B cell (primary cell): ENCODE measurements at regions of chr1 and their contacts with region 1.

Region 1: GRCh38 chr1:153922972-153923925 is at the start of gene GATAD2B:
- DNase-seq: peak; percentile 100
- ATAC-seq: peak; percentile 91
- H3K4me3 ChIP-seq: peak within 1 kb of the TSS; percentile 85 to 98 (median 97)
- H3K4me3 Mint-ChIP-seq: peak within 1 kb of the TSS; percentile 95
- H3K27ac ChIP-seq: peak within 1 kb of the TSS; percentile 84 to 99
- H3K27ac Mint-ChIP-seq: peak within 1 kb of the TSS; percentile 99
- H3K4me1 ChIP-seq: peaks cover 39 to 41% of the 10 kb centered on the region in 2 donors
- H3K4me1 Mint-ChIP-seq: peaks cover 43% of the 10 kb centered on the region
- H3K27me3 ChIP-seq: no peaks in the 10 kb centered on the region
- H3K27me3 Mint-ChIP-seq: no peaks in the 10 kb centered on the region
- CTCF ChIP-seq: no peak
- total RNA-seq, gene GATAD2B: 99.6 and 105 TPM in 2 replicates

Region 2: GRCh38 chr1:153670859-153671627 is 252.2 kb before region 1 on chr1 and contains the start of gene ILF2:
- CTCF ChIA-PET with region 1: no interaction called
- POLR2A ChIA-PET with region 1: no interaction called
- intact Hi-C with region 1: loop called (anchors 2 kb)
- DNase-seq: peak; percentile 99
- ATAC-seq: peak; percentile 90
- H3K4me3 ChIP-seq: peak within 1 kb of the TSS; percentile 74 to 99 (median 94)
- H3K4me3 Mint-ChIP-seq: no peak within 1 kb of the TSS
- H3K27ac ChIP-seq: peak within 1 kb of the TSS; percentile 86 to 95
- H3K27ac Mint-ChIP-seq: no peak within 1 kb of the TSS
- H3K4me1 ChIP-seq: peaks cover 10 to 18% of the 10 kb centered on the region in 2 donors
- H3K4me1 Mint-ChIP-seq: peaks cover 18% of the 10 kb centered on the region
- H3K27me3 ChIP-seq: no peaks in the 10 kb centered on the region
- H3K27me3 Mint-ChIP-seq: peaks cover under 1% of the 10 kb centered on the region
- CTCF ChIP-seq: peak; percentile 26
- total RNA-seq, gene ILF2: 86.5 and 89.8 TPM in 2 replicates

Region 3: DNA sequence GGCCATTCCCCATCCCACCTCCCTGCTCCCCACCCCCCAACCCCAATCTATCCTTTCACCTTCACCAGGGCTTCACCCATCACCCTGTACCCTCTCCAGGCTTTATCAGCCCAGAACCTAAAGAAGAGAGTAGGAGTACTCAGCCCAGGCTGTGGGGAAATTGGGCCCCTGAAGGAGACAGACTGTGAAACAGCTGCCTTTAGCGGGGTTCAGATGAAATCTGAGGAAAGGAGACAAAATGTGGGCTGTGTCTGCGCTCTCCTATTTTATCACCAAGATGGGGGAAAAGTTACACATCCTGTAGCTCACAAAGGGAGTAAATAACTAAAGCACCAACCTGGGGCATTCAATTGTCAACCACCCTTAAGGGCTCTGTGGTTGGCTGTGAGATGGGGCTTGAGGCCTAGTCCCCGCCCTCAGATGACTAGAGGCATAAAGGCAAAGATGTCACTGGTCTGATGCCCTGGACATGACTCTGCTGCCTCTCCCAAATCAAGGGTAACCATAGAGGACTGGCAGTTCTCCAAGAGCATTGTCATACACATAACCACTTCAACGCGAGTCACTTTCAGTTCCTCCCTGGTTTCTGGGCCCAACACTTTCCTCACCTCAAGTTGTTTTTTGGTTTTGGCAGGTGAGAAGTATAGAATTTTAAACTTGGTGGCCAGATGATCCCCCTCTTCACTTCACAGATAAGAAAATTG is 118.1 kb before region 1 on chr1:
- CTCF ChIA-PET with region 1: interaction called, 4 read pairs
- POLR2A ChIA-PET with region 1: interaction called, 3 read pairs
- intact Hi-C with region 1: loop called (anchors 1 kb)
- DNase-seq: peak; percentile 91
- ATAC-seq: peak; percentile 98
- H3K4me3 ChIP-seq: no peak overlapping the region
- H3K4me3 Mint-ChIP-seq: peak overlapping the region; percentile 21
- H3K27ac ChIP-seq: peak overlapping the region; percentile 82 to 88
- H3K27ac Mint-ChIP-seq: peak overlapping the region; percentile 81
- H3K4me1 ChIP-seq: peaks cover 22 to 33% of the 10 kb centered on the region in 2 donors
- H3K4me1 Mint-ChIP-seq: peaks cover 30% of the 10 kb centered on the region
- H3K27me3 ChIP-seq: no peaks in the 10 kb centered on the region
- H3K27me3 Mint-ChIP-seq: no peaks in the 10 kb centered on the region
- CTCF ChIP-seq: no peak

Region 4: DNA sequence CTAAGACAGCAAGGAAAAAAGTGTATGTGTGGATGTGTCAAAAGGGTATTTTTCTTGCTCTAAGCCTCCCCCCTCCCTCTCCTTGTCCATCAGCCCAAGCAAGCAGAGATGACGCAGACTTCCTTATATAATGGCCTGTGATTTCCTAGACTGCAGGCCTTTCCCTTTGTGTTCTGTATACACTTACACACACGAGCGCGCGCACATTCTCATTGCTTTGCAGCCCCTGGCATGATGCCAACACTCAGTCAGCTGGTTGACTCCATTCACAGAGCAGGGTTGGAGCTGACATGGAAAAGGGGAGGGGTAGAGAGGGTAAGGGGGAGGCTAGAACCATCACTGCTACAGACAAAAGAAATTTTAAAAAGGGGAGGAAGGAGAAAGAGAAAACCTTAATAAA is 42.3 kb before region 1 on chr1:
- CTCF ChIA-PET with region 1: interaction called, 3 read pairs
- POLR2A ChIA-PET with region 1: no interaction called
- intact Hi-C with region 1: loop called (anchors 5 kb)
- DNase-seq: peak; percentile 54
- ATAC-seq: peak; percentile 82
- H3K4me3 ChIP-seq: no peak overlapping the region
- H3K4me3 Mint-ChIP-seq: no peak overlapping the region
- H3K27ac ChIP-seq: peak overlapping the region; percentile 29 to 39
- H3K27ac Mint-ChIP-seq: no peak overlapping the region
- H3K4me1 ChIP-seq: peaks cover 27 to 36% of the 10 kb centered on the region in 2 donors
- H3K4me1 Mint-ChIP-seq: peaks cover 27% of the 10 kb centered on the region
- H3K27me3 ChIP-seq: no peaks in the 10 kb centered on the region
- H3K27me3 Mint-ChIP-seq: no peaks in the 10 kb centered on the region
- CTCF ChIP-seq: no peak

Region 5: DNA sequence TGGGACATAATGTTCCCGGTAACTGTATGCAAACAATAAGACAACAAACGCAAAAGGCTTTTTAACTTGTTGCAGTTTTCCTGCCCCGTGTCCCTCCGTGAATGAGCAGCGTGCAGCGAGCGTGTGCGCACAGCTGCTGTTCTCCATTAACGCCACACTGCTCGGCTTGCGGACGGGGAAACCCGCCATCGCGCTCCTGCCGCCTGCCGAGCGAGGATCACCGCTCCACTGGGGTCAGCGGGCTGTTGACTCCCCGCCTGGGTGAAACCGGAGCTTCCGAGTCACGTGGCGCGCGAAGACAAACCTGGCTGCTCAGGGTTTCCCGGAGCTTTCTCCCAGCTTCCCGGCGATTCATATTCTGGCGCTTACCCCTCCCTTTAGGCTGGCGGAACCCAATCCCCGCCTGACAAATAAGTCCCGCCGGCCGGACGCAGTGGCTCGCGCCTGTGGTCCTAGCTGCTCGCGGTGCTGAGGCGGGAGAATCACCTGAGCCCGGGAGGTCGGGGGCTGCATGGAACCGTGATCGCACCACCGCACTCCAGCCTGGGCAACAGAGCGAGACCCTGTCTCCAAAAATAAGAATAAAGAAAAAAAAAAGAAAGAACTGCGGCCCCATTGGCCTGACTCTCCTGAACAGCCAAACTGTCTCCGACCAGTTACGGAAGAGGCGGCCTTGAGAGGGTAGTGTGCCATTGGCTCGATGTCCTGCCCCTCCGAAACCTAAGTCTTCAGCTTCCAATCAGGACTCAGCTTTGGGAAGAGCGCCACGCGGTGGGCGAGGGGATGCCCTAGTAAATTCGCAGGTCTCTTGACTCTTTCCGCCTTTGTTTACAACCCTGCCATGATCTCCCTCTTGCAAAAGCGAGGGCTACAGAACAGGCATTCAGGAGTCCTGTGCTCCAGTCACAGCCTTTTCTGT is 44.1 kb after region 1 on chr1 and contains the start of gene CREB3L4:
- CTCF ChIA-PET with region 1: interaction called, 6 read pairs
- POLR2A ChIA-PET with region 1: interaction called, 28 read pairs
- intact Hi-C with region 1: loop called (anchors 1 kb)
- DNase-seq: peak; percentile 94
- ATAC-seq: peak; percentile 82
- H3K4me3 ChIP-seq: peak within 1 kb of the TSS; percentile 73 to 95 (median 90)
- H3K4me3 Mint-ChIP-seq: peak within 1 kb of the TSS; percentile 98
- H3K27ac ChIP-seq: peak within 1 kb of the TSS; percentile 91 to 94
- H3K27ac Mint-ChIP-seq: peak within 1 kb of the TSS; percentile 99
- H3K4me1 ChIP-seq: peaks cover 43 to 51% of the 10 kb centered on the region in 2 donors
- H3K4me1 Mint-ChIP-seq: peaks cover 49% of the 10 kb centered on the region
- H3K27me3 ChIP-seq: no peaks in the 10 kb centered on the region
- H3K27me3 Mint-ChIP-seq: no peaks in the 10 kb centered on the region
- CTCF ChIP-seq: peak; percentile 39
- total RNA-seq, gene CREB3L4: 19.9 and 21.8 TPM in 2 replicates

Region 6: GRCh38 chr1:154627257-154628120 is 704.2 kb after region 1 on chr1:
- CTCF ChIA-PET with region 1: no interaction called
- POLR2A ChIA-PET with region 1: no interaction called
- intact Hi-C with region 1: loop called (anchors 5 kb)
- DNase-seq: peak; percentile 93
- ATAC-seq: peak; percentile 77
- H3K4me3 ChIP-seq: peak overlapping the region; percentile 66 to 94 (median 88)
- H3K4me3 Mint-ChIP-seq: peak overlapping the region; percentile 94
- H3K27ac ChIP-seq: peak overlapping the region; percentile 94 to 98
- H3K27ac Mint-ChIP-seq: peak overlapping the region; percentile 99
- H3K4me1 ChIP-seq: peaks cover 8 to 12% of the 10 kb centered on the region in 2 donors
- H3K4me1 Mint-ChIP-seq: peaks cover 35% of the 10 kb centered on the region
- H3K27me3 ChIP-seq: peaks cover 0 to 3% (median 0%) of the 10 kb centered on the region in 4 experiments
- H3K27me3 Mint-ChIP-seq: peaks cover 6% of the 10 kb centered on the region
- CTCF ChIP-seq: no peak

Region 7: GRCh38 chr1:154870115-154870571 is 946.9 kb after region 1 on chr1 and contains the start of gene KCNN3:
- CTCF ChIA-PET with region 1: no interaction called
- POLR2A ChIA-PET with region 1: no interaction called
- intact Hi-C with region 1: no loop called
- DNase-seq: peak; percentile 89
- ATAC-seq: peak; percentile 100
- H3K4me3 ChIP-seq: peak within 1 kb of the TSS in 1 of 5 experiments; percentile 21
- H3K4me3 Mint-ChIP-seq: peak within 1 kb of the TSS; percentile 71
- H3K27ac ChIP-seq: no peak within 1 kb of the TSS
- H3K27ac Mint-ChIP-seq: no peak within 1 kb of the TSS
- H3K4me1 ChIP-seq: peaks cover 35 to 42% of the 10 kb centered on the region in 2 donors
- H3K4me1 Mint-ChIP-seq: peaks cover 48% of the 10 kb centered on the region
- H3K27me3 ChIP-seq: peaks cover 0 to 34% (median 18%) of the 10 kb centered on the region in 4 experiments
- H3K27me3 Mint-ChIP-seq: peaks cover 43% of the 10 kb centered on the region
- CTCF ChIP-seq: no peak
- total RNA-seq, gene KCNN3: 0.17 and 0.29 TPM in 2 replicates